CD4-positive, alpha-beta memory T cell (primary cell): ENCODE measurements at regions of chr11 and their contacts with region 1.

Region 1: DNA sequence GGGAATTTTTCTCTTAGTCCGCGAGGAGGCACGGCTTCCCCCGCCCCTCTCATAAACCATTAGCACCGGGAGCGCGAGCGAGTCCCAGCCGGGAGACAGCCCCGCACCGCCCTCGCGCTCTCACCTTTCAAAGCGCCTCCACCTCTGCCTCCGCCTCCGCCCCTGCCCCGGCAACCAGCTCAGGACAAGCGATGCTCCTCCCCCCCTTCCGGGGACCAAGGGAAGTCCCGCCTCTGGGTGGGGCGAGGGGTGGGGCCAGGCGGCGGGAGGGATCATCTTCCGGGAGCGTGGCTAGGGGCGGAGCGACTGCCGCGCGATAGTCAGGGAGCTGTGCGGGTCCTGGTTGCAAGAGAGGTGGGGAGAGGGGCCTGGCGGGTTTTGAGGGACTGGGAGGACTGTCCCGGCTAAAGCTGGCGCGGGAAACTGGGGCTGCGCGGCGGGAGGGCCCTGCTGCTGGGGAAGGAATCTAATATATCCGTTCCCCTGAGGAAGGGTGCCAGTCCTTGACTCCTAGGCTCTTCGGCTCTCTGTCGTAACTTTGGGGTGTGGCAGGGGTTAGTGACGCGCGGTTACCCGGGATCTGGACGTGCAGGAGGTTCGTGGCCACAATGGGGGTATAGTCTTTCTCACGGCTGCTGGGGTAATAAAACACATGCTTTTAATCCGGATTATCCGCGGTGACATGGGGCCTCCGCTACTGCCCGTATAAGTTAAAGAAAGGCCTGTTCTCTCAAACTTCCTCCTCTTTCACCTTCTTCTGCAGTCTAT is at the starts of genes CCDC82 and JRKL:
- DNase-seq: peak; percentile 97 to 99 (median 98)
- H3K4me3 ChIP-seq: peak within 1 kb of the TSS; percentile 85 to 93
- H3K4me3 Mint-ChIP-seq: peak within 1 kb of the TSS; percentile 92 to 98 (median 94)
- H3K27ac ChIP-seq: peak within 1 kb of the TSS; percentile 79
- H3K27ac Mint-ChIP-seq: peak within 1 kb of the TSS; percentile 91 to 98 (median 97)
- H3K4me1 ChIP-seq: peaks cover 36% of the 10 kb centered on the region
- H3K4me1 Mint-ChIP-seq: peaks cover 22 to 59% (median 37%) of the 10 kb centered on the region in 4 donors
- H3K27me3 ChIP-seq: no peaks in the 10 kb centered on the region
- H3K27me3 Mint-ChIP-seq: no peaks in the 10 kb centered on the region
- total RNA-seq, gene CCDC82: 37.9 to 42.8 TPM
- total RNA-seq, gene JRKL: 18.3 to 20.0 TPM

Region 2: DNA sequence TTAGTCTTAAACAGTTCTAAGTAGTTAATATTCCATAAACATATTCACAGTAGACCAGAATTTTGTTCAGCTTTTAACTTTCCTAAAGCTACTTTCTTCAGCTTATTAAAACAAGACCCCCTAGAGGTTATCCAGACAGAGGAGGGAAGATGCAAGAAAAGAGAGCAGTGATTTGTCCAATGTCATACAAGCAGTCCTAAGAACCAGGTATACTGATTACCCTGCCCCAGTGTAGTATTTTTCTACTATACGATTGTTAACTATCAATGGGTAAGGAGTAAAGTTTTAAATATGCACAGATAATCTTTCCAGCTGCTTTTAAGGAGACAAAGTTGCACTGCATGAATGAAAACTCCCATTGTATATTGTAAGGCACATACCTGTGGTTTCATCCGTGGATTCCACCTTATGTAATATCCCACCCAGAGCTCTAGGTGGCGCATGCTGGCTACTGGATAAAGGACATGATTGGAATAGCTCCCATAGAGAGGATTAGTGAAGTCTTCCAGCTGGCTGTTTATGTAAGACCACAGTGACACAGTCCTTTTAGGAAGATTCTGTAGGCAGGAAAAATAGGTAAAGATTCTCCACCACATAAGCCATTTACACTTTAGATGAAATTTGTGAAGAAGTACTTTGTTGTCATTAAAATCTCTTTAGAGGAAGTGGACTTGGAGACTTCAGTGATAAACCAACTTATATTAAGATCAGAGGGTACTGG is 554.0 kb before region 1 on chr11:
- CTCF ChIA-PET with region 1: interaction called, 66 read pairs
- POLR2A ChIA-PET with region 1: interaction called, 9 read pairs
- intact Hi-C with region 1: loop called (anchors 1 kb)
- DNase-seq: peak; percentile 55 to 64 (median 55)
- H3K4me3 ChIP-seq: no peak overlapping the region
- H3K4me3 Mint-ChIP-seq: no peak overlapping the region
- H3K27ac ChIP-seq: no peak overlapping the region
- H3K27ac Mint-ChIP-seq: peak overlapping the region in 4 of 7 donors; percentile 1 to 75 (median 51)
- H3K4me1 ChIP-seq: no peaks in the 10 kb centered on the region
- H3K4me1 Mint-ChIP-seq: peaks cover 0 to 3% (median 1%) of the 10 kb centered on the region in 4 donors
- H3K27me3 ChIP-seq: no peaks in the 10 kb centered on the region
- H3K27me3 Mint-ChIP-seq: no peaks in the 10 kb centered on the region

Region 3: GRCh38 chr11:95923728-95924413 is 466.0 kb before region 1 on chr11 and contains the start of gene MTMR2:
- CTCF ChIA-PET with region 1: interaction called, 3 read pairs
- POLR2A ChIA-PET with region 1: no interaction called
- intact Hi-C with region 1: loop called (anchors 5 kb)
- DNase-seq: peak; percentile 29 to 40 (median 33)
- H3K4me3 ChIP-seq: peak within 1 kb of the TSS; percentile 88 to 93
- H3K4me3 Mint-ChIP-seq: peak within 1 kb of the TSS; percentile 90 to 96 (median 94)
- H3K27ac ChIP-seq: peak within 1 kb of the TSS; percentile 58
- H3K27ac Mint-ChIP-seq: peak within 1 kb of the TSS; percentile 75 to 98 (median 94)
- H3K4me1 ChIP-seq: peaks cover 26% of the 10 kb centered on the region
- H3K4me1 Mint-ChIP-seq: peaks cover 23 to 32% (median 27%) of the 10 kb centered on the region in 4 donors
- H3K27me3 ChIP-seq: no peaks in the 10 kb centered on the region
- H3K27me3 Mint-ChIP-seq: peaks cover 0 to 2% of the 10 kb centered on the region in 2 donors
- total RNA-seq, gene MTMR2: 13.4 to 13.6 TPM

Region 4: GRCh38 chr11:96054870-96055705 is 334.8 kb before region 1 on chr11:
- CTCF ChIA-PET with region 1: interaction called, 29 read pairs
- POLR2A ChIA-PET with region 1: interaction called, 7 read pairs
- intact Hi-C with region 1: loop called (anchors 1 kb)
- DNase-seq: peak in 4 of 5 donors; percentile 31 to 41 (median 36)
- H3K4me3 ChIP-seq: no peak overlapping the region
- H3K4me3 Mint-ChIP-seq: no peak overlapping the region
- H3K27ac ChIP-seq: no peak overlapping the region
- H3K27ac Mint-ChIP-seq: peak overlapping the region in 5 of 7 donors; percentile 19 to 81 (median 65)
- H3K4me1 ChIP-seq: no peaks in the 10 kb centered on the region
- H3K4me1 Mint-ChIP-seq: peaks cover 23 to 40% (median 39%) of the 10 kb centered on the region in 4 donors
- H3K27me3 ChIP-seq: no peaks in the 10 kb centered on the region
- H3K27me3 Mint-ChIP-seq: no peaks in the 10 kb centered on the region

Region 5: DNA sequence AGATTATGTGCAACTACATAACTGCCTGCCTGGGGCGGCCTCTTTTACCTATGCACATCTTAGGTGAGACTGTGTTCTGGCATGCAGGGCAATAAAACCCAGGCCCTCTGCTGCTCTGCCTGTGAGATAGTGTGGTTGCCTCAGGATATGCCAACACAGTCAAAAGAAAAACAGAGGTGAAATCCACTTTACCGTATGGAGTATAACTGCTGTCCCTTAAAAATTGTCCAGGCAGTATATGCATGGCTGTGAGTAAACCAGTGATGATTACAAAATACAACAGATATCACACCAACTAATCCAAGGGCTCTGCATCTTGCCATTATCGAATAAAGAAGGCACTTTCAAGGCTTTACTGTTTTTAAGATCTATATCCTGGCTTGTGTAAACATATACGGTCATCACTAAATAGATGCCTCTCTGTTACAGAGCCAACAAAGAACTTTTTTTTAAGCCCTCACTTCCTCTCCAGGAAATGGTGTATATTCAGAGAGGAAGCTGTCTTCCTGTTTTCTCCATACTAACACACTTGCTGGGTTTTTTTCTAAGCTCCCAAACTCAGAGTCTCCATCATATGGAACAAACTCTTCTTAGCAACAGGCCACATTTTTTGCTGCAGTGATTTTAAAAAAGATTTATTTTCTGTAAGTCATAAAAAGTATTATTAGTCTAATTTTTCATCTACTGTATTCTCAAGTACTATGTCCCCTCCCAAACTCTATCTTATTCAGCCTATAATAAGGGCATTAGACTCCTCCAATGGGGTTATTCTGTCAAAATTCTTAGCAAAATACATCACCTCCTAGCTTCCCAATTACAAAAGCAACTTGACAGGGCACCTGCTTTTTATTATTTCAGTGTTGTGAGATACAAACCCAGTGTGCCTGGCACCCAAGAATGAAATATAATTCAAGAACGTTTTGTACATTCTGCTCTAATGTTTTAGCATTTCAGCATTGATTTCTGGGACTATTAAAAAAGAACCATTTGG is 182.2 kb before region 1 on chr11:
- CTCF ChIA-PET with region 1: no interaction called
- POLR2A ChIA-PET with region 1: no interaction called
- intact Hi-C with region 1: no loop called
- DNase-seq: peak in 4 of 5 donors; percentile 52 to 62 (median 56)
- H3K4me3 ChIP-seq: peak overlapping the region in 1 of 2 donors; percentile 16
- H3K4me3 Mint-ChIP-seq: peak overlapping the region; percentile 31 to 89 (median 70)
- H3K27ac ChIP-seq: peak overlapping the region; percentile 39
- H3K27ac Mint-ChIP-seq: peak overlapping the region; percentile 80 to 97 (median 90)
- H3K4me1 ChIP-seq: peaks cover 97% of the 10 kb centered on the region
- H3K4me1 Mint-ChIP-seq: peaks cover 62 to 92% (median 79%) of the 10 kb centered on the region in 4 donors
- H3K27me3 ChIP-seq: no peaks in the 10 kb centered on the region
- H3K27me3 Mint-ChIP-seq: no peaks in the 10 kb centered on the region